ENCODE measurements at regions of chr11 and their contacts with region 1.

Region 1: GRCh38 chr11:69642913-69643632 is 2.1 kb downstream of the CCND1 start:
- DNase-seq: peak; percentile 84 to 85
- H3K4me3 ChIP-seq: peak overlapping the region; percentile 69 to 96 (median 85)
- H3K27ac ChIP-seq: peak overlapping the region; percentile 93 to 97 (median 96)
- H3K4me1 ChIP-seq: peaks cover 32 to 34% of the 10 kb centered on the region in 2 donors
- H3K27me3 ChIP-seq: no peaks in the 10 kb centered on the region
- CTCF ChIP-seq: peak; percentile 48 to 96 (median 84)
- POLR2A ChIP-seq: peak in 1 of 2 donors; percentile 66

Region 2: GRCh38 chr11:69101115-69101791 is 541.8 kb before region 1 on chr11:
- intact Hi-C with region 1: loop called (anchors 2 kb)
- DNase-seq: peak; percentile 87 to 89
- H3K4me3 ChIP-seq: no peak overlapping the region
- H3K27ac ChIP-seq: no peak overlapping the region
- H3K4me1 ChIP-seq: peaks cover 10 to 14% of the 10 kb centered on the region in 2 donors
- H3K27me3 ChIP-seq: no peaks in the 10 kb centered on the region
- CTCF ChIP-seq: peak; percentile 97 to 100 (median 98)
- POLR2A ChIP-seq: no peak

Region 3: DNA sequence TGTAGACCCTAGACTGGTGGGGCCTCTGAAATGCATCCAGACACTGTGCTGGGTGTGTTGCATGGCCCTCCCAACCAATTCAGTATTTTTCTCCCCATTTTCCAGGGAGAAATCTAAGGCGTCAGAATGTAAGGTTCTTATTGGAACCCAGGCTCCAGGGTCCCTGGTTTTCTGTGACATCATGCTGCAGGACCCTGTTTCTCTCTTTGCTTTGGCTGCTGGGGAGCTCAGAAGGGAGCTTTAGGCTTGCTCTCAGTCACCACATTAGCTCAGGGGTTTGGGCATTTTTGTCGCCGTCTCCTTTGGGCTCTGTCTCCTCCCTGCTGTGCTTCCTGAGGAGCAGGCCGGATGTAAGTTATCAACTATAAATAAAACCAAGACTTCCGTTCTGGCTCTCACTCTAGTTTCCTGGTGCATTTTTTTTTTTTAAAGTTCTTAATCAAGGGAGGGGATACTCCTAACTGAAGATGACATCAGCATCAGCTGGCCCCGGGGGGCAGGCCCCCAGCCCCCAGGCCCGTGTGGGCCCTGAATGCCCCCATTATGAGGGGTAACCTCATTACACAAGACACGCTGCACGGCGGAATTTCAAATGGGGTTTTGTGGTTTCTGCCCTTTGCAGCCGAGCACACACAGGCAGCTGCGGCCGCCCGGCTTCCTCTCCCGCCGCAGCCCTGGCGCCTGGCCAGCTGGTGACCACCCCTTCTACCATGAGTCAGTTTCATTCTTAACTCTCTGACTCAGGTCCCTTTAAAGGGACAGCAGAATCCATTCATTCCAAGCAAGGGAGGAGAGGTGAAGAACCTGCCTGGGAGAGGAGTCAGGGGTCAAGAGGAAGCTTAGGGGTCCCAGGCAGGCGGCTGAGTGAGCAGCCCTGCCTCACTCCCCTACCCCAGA is 345.9 kb before region 1 on chr11:
- intact Hi-C with region 1: loop called (anchors 2 kb)
- DNase-seq: peak; percentile 75 to 83
- H3K4me3 ChIP-seq: no peak overlapping the region
- H3K27ac ChIP-seq: peak overlapping the region; percentile 72 to 84 (median 73)
- H3K4me1 ChIP-seq: peaks cover 16 to 61% of the 10 kb centered on the region in 2 donors
- H3K27me3 ChIP-seq: no peaks in the 10 kb centered on the region
- CTCF ChIP-seq: no peak
- POLR2A ChIP-seq: no peak

Region 4: DNA sequence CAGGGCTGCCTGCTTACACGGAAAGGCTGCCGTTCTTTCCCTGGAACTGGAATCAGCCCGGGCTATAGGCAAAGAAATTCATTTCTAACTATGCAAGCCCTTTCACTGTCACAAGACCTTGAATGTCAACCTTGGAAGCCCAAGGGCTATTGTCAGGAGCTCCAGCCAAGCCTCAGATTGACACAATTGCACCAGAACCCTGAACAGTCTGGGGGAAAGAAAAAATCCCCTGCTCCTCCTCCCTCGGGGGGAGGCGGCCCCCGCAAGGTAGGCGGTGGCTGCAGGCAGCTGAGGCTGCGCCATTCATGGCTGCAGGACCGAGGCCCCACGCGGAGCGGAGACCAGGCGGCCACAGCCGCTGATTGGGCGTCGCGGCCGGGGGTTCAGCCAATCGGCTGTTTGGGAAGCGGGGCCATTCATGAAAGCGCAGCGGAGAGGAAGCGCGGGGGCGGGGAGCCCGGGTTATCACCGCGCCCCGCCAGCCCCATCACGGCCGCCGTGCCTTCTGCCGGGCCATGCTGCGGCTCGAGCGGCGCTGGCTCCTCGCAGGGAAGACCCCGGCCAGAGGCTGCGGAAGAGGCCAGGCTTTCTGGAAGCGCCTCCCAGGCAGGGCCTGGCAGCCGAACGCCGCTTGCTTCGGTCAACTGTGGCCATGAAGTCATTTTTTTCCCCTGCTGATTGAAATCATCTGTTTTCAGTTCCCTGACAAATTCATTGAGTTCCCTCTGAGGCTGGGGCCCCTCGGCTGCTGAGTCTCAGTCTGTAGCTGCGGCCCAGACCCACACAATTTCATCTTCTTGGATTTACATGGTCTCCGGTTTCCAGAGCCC is 199.7 kb before region 1 on chr11:
- intact Hi-C with region 1: loop called (anchors 5 kb)
- DNase-seq: peak; percentile 90 to 91
- H3K4me3 ChIP-seq: peak overlapping the region in 2 of 3 donors; percentile 14 to 18
- H3K27ac ChIP-seq: peak overlapping the region; percentile 50 to 87 (median 75)
- H3K4me1 ChIP-seq: peaks cover 39 to 51% of the 10 kb centered on the region in 2 donors
- H3K27me3 ChIP-seq: no peaks in the 10 kb centered on the region
- CTCF ChIP-seq: no peak
- POLR2A ChIP-seq: peak in 1 of 2 donors; percentile 74

Region 5: GRCh38 chr11:69539416-69540117 is 103.5 kb before region 1 on chr11:
- intact Hi-C with region 1: loop called (anchors 10 kb)
- DNase-seq: peak; percentile 75 to 81
- H3K4me3 ChIP-seq: no peak overlapping the region
- H3K27ac ChIP-seq: peak overlapping the region; percentile 63 to 88 (median 69)
- H3K4me1 ChIP-seq: peaks cover 28 to 43% of the 10 kb centered on the region in 2 donors
- H3K27me3 ChIP-seq: no peaks in the 10 kb centered on the region
- CTCF ChIP-seq: no peak
- POLR2A ChIP-seq: peak in 1 of 2 donors; percentile 50

Region 6: DNA sequence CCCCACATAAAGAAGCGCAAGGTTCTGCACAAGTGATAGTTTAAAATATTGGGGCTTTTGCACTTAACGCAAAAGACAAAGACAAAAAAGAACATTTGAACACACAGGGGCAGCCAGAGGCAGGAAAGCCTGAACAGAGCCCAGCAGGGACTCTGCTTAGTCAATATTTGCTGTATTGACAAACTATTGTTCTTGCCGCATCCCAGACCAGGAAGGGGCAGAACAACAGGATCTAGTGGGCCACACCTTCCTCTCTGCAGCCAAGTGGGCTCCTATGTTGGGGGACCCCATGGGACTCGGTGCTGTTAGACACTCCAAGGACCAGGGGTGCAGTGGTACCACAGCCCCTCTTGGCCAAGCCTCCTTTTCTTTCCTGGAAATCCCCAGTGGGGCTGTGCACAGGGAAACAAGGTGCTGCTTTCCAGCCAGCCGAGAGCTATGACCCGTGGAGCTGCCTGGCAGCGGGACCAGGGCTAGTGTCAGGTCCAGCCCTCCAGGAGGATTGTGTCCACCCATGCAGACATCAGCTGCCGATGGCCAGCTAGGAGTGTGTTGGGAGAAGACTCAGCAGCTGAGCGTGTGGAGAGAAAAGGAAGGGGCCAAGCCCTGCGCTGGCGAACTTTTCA is 391.8 kb after region 1 on chr11:
- intact Hi-C with region 1: no loop called
- DNase-seq: peak; percentile 32 to 33
- H3K4me3 ChIP-seq: no peak overlapping the region
- H3K27ac ChIP-seq: no peak overlapping the region
- H3K4me1 ChIP-seq: peaks cover 0 to under 1% of the 10 kb centered on the region in 2 donors
- H3K27me3 ChIP-seq: no peaks in the 10 kb centered on the region
- CTCF ChIP-seq: no peak
- POLR2A ChIP-seq: no peak